IMR-90 (cell line): ENCODE measurements at regions of chr1 and their contacts with region 1.

Region 1: GRCh38 chr1:111507411-111508201 is 4.2 kb upstream of the ADORA3 start:
- DNase-seq: peak; percentile 55
- ATAC-seq: peak; percentile 81
- H3K4me3 ChIP-seq: no peak overlapping the region
- H3K27ac ChIP-seq: peak overlapping the region; percentile 86
- H3K4me1 ChIP-seq: peaks cover 10% of the 10 kb centered on the region
- H3K27me3 ChIP-seq: peaks cover 8% of the 10 kb centered on the region
- CTCF ChIP-seq: 0 out of 2 replicates have a peak, but pooled peaks have one; percentile 4
- POLR2A ChIP-seq: no peak
- RAD21 ChIP-seq: no peak

Region 2: GRCh38 chr1:111052246-111052645 is 455.4 kb before region 1 on chr1:
- CTCF ChIA-PET with region 1: no interaction called
- POLR2A ChIA-PET with region 1: no interaction called
- dilution Hi-C with region 1: no loop called
- in situ Hi-C with region 1: no loop called
- intact Hi-C with region 1: no loop called
- DNase-seq: peak; percentile 19
- ATAC-seq: no peak
- H3K4me3 ChIP-seq: no peak overlapping the region
- H3K27ac ChIP-seq: no peak overlapping the region
- H3K4me1 ChIP-seq: no peaks in the 10 kb centered on the region
- H3K27me3 ChIP-seq: no peaks in the 10 kb centered on the region
- CTCF ChIP-seq: no peak
- POLR2A ChIP-seq: no peak
- RAD21 ChIP-seq: no peak

Region 3: GRCh38 chr1:111497592-111497991 is 10.0 kb before region 1 on chr1:
- CTCF ChIA-PET with region 1: interaction called, 12 read pairs
- POLR2A ChIA-PET with region 1: no interaction called
- dilution Hi-C with region 1: no loop called
- in situ Hi-C with region 1: no loop called
- intact Hi-C with region 1: no loop called
- DNase-seq: no peak
- ATAC-seq: no peak
- H3K4me3 ChIP-seq: no peak overlapping the region
- H3K27ac ChIP-seq: no peak overlapping the region
- H3K4me1 ChIP-seq: no peaks in the 10 kb centered on the region
- H3K27me3 ChIP-seq: peaks cover 25% of the 10 kb centered on the region
- CTCF ChIP-seq: no peak
- POLR2A ChIP-seq: no peak
- RAD21 ChIP-seq: no peak

Region 4: GRCh38 chr1:111570781-111571181 is 63.2 kb after region 1 on chr1:
- CTCF ChIA-PET with region 1: no interaction called
- POLR2A ChIA-PET with region 1: no interaction called
- dilution Hi-C with region 1: no loop called
- in situ Hi-C with region 1: no loop called
- intact Hi-C with region 1: loop called (anchors 5 kb)
- DNase-seq: peak; percentile 35
- ATAC-seq: no peak
- H3K4me3 ChIP-seq: no peak overlapping the region
- H3K27ac ChIP-seq: no peak overlapping the region
- H3K4me1 ChIP-seq: peaks cover 18% of the 10 kb centered on the region
- H3K27me3 ChIP-seq: no peaks in the 10 kb centered on the region
- CTCF ChIP-seq: peak; percentile 21; the same call in 1 of the 2 replicates
- POLR2A ChIP-seq: no peak
- RAD21 ChIP-seq: no peak

Region 5: DNA sequence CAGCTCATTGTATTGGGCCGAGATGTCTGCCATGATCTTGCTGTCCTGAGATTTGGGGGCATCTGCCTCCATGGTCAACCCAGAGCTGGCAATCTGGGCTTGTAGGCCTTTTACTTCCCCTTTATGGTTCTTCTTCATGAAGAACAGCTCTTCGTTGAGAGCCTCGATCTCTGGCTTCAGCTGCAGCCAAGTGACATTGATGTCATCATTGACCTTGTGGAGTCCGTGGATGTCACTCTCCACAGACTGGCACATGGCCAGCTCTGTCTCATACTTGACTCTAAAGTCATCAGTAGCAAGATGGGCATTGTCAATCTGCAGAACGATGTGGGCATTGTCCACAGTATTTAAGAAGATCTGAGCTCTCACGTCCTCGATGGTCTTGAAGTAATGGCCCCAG is 141.2 kb after region 1 on chr1:
- CTCF ChIA-PET with region 1: interaction called, 4 read pairs
- POLR2A ChIA-PET with region 1: no interaction called
- dilution Hi-C with region 1: no loop called
- in situ Hi-C with region 1: loop called (anchors 5 kb)
- intact Hi-C with region 1: no loop called
- DNase-seq: no peak
- ATAC-seq: no peak
- H3K4me3 ChIP-seq: no peak overlapping the region
- H3K27ac ChIP-seq: no peak overlapping the region
- H3K4me1 ChIP-seq: peaks cover 3% of the 10 kb centered on the region
- H3K27me3 ChIP-seq: no peaks in the 10 kb centered on the region
- CTCF ChIP-seq: no peak
- POLR2A ChIP-seq: no peak
- RAD21 ChIP-seq: no peak

Region 6: GRCh38 chr1:111666841-111667270 is 159.2 kb after region 1 on chr1:
- CTCF ChIA-PET with region 1: interaction called, 11 read pairs
- POLR2A ChIA-PET with region 1: no interaction called
- dilution Hi-C with region 1: no loop called
- in situ Hi-C with region 1: no loop called
- intact Hi-C with region 1: no loop called
- DNase-seq: no peak
- ATAC-seq: no peak
- H3K4me3 ChIP-seq: no peak overlapping the region
- H3K27ac ChIP-seq: no peak overlapping the region
- H3K4me1 ChIP-seq: no peaks in the 10 kb centered on the region; the same call in 1 of the 2 replicates
- H3K27me3 ChIP-seq: no peaks in the 10 kb centered on the region
- CTCF ChIP-seq: no peak
- POLR2A ChIP-seq: no peak
- RAD21 ChIP-seq: no peak

Region 7: GRCh38 chr1:111720274-111720976 is 212.8 kb after region 1 on chr1:
- CTCF ChIA-PET with region 1: interaction called, 12 read pairs
- POLR2A ChIA-PET with region 1: no interaction called
- dilution Hi-C with region 1: no loop called
- in situ Hi-C with region 1: no loop called
- intact Hi-C with region 1: loop called (anchors 2 kb)
- DNase-seq: no peak
- ATAC-seq: no peak
- H3K4me3 ChIP-seq: no peak overlapping the region
- H3K27ac ChIP-seq: no peak overlapping the region
- H3K4me1 ChIP-seq: peaks cover 12% of the 10 kb centered on the region
- H3K27me3 ChIP-seq: no peaks in the 10 kb centered on the region
- CTCF ChIP-seq: no peak
- POLR2A ChIP-seq: no peak
- RAD21 ChIP-seq: no peak

Region 8: DNA sequence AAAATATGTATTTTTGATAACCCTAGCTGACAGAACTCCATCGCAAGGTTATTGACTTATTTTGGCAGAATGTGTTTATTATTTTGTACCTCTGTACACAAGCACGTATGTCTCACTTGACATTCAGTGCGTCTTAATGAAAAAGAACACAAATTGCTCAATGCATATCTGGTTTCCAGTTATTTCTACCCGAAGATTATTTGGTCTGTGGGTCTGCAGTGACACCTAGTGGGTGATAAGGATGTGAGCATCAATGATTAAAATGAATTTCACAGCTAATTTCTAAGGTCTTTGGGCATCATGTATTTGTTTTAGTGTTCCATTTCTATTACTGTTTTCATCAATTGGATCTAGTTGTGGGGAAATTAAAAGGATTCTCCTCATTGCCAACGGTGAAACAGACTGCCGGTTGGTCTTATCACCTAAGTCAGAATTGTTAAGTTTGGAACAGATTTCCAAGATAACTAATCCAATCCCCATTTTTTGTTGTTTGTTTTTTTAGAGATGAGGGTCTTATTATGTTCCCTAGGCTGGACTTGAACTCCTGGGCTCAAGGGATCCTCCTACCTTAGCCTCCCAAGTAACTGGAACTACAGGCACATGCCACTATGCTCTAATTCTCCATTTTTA is 262.0 kb after region 1 on chr1:
- CTCF ChIA-PET with region 1: interaction called, 9 read pairs
- POLR2A ChIA-PET with region 1: no interaction called
- dilution Hi-C with region 1: no loop called
- in situ Hi-C with region 1: no loop called
- intact Hi-C with region 1: loop called (anchors 1 kb)
- DNase-seq: peak; percentile 78
- ATAC-seq: peak; percentile 74
- H3K4me3 ChIP-seq: no peak overlapping the region
- H3K27ac ChIP-seq: no peak overlapping the region
- H3K4me1 ChIP-seq: no peaks in the 10 kb centered on the region; the same call in 1 of the 2 replicates
- H3K27me3 ChIP-seq: no peaks in the 10 kb centered on the region
- CTCF ChIP-seq: peak; percentile 90
- POLR2A ChIP-seq: no peak
- RAD21 ChIP-seq: peak; percentile 94